ENCODE measurements at regions of chr15 and their contacts with region 1.

Region 1: DNA sequence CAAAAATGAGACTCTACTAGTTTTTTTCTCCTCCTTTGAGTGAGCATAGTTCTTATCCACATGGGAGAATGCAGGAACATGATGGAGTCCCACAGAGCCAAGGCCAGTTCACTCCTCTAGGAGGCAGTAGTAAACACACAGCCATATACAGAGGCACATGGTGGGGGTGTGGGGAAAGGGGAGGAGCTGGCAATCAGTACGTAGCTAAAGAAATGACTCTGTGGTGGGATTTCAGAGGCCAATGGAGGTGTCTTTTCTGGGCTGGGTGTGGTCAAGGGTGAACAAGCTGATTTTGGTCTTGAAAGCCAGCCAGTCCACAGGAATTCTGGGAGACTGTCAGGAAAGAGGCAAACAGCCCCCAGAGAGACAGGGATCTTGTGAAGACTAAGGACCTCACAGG is 6.6 kb upstream of the RAB11A start:
- DNase-seq: no peak
- H3K4me3 ChIP-seq: no peak overlapping the region
- H3K27ac ChIP-seq: no peak overlapping the region
- H3K4me1 ChIP-seq: no peaks in the 10 kb centered on the region
- H3K27me3 ChIP-seq: no peaks in the 10 kb centered on the region
- CTCF ChIP-seq: no peak
- EP300 ChIP-seq: no peak
- POLR2A ChIP-seq: no peak

Region 2: GRCh38 chr15:65690778-65691177 is 171.9 kb before region 1 on chr15:
- intact Hi-C with region 1: loop called in 1 of 4 experiments (anchors 5 kb)
- DNase-seq: no peak
- H3K4me3 ChIP-seq: no peak overlapping the region
- H3K27ac ChIP-seq: no peak overlapping the region
- H3K4me1 ChIP-seq: no peaks in the 10 kb centered on the region
- H3K27me3 ChIP-seq: no peaks in the 10 kb centered on the region
- CTCF ChIP-seq: no peak
- EP300 ChIP-seq: no peak
- POLR2A ChIP-seq: no peak

Region 3: DNA sequence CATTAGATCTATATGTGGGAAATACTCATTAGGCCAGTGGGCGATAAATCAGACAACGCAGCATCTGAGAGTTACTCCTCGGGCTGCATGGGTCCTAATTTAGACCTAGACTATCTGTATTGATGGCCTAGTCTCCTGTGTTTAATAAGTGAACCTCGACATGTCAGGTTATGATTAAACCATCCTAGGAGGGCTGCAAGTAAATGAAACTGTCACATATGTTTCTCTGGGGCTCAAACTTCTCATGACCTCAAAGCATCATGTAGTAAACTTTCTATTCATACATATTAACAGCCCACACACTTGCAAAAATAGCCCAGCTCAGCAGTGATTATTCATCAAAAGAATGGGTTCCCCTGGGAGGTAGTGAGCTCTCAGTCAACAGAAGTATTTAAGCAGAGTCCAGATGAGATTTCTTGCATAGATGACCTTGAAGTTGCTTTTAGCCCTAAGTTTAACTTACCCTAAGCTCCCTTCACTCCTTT is 58.2 kb after region 1 on chr15:
- intact Hi-C with region 1: no loop called
- DNase-seq: no peak
- H3K4me3 ChIP-seq: no peak overlapping the region
- H3K27ac ChIP-seq: no peak overlapping the region
- H3K4me1 ChIP-seq: peaks cover 8% of the 10 kb centered on the region
- H3K27me3 ChIP-seq: no peaks in the 10 kb centered on the region
- CTCF ChIP-seq: no peak
- EP300 ChIP-seq: no peak
- POLR2A ChIP-seq: no peak

Measured in ovary (tissue), 10 donors.